ENCODE measurements at regions of chr4 and their contacts with region 1.

Region 1: GRCh38 chr4:138680989-138681604 is 334.5 kb upstream of the NOCT start:
- DNase-seq: peak; percentile 62
- H3K4me3 ChIP-seq: no peak overlapping the region
- H3K27ac ChIP-seq: no peak overlapping the region
- H3K4me1 ChIP-seq: peaks cover 0 to 10% of the 10 kb centered on the region in 2 experiments; a peak in 2 of 4 replicates
- H3K27me3 ChIP-seq: no peaks in the 10 kb centered on the region
- CTCF ChIP-seq: peak; percentile 94
- EP300 ChIP-seq: no peak
- RAD21 ChIP-seq: peak; percentile 99

Region 2: GRCh38 chr4:138090150-138090917 is 590.8 kb before region 1 on chr4:
- CTCF ChIA-PET with region 1: interaction called, 18 read pairs
- POLR2A ChIA-PET with region 1: no interaction called
- DNase-seq: peak; percentile 78
- H3K4me3 ChIP-seq: peak overlapping the region; percentile 34 to 40
- H3K27ac ChIP-seq: no peak overlapping the region
- H3K4me1 ChIP-seq: no peaks in the 10 kb centered on the region; a peak in 2 of 4 replicates
- H3K27me3 ChIP-seq: no peaks in the 10 kb centered on the region
- CTCF ChIP-seq: peak; percentile 81
- EP300 ChIP-seq: 0 out of 4 replicates have a peak, but pooled peaks of 1 of the 2 experiments have one; percentile 22
- RAD21 ChIP-seq: peak; percentile 89

Region 3: GRCh38 chr4:138182838-138183426 is 498.2 kb before region 1 on chr4:
- CTCF ChIA-PET with region 1: interaction called, 35 read pairs
- POLR2A ChIA-PET with region 1: no interaction called
- DNase-seq: peak; percentile 10
- H3K4me3 ChIP-seq: no peak overlapping the region
- H3K27ac ChIP-seq: no peak overlapping the region
- H3K4me1 ChIP-seq: peaks cover 0 to 2% of the 10 kb centered on the region in 2 experiments; a peak in 1 of 4 replicates
- H3K27me3 ChIP-seq: no peaks in the 10 kb centered on the region
- CTCF ChIP-seq: peak; percentile 85
- EP300 ChIP-seq: no peak
- RAD21 ChIP-seq: peak; percentile 90

Region 4: DNA sequence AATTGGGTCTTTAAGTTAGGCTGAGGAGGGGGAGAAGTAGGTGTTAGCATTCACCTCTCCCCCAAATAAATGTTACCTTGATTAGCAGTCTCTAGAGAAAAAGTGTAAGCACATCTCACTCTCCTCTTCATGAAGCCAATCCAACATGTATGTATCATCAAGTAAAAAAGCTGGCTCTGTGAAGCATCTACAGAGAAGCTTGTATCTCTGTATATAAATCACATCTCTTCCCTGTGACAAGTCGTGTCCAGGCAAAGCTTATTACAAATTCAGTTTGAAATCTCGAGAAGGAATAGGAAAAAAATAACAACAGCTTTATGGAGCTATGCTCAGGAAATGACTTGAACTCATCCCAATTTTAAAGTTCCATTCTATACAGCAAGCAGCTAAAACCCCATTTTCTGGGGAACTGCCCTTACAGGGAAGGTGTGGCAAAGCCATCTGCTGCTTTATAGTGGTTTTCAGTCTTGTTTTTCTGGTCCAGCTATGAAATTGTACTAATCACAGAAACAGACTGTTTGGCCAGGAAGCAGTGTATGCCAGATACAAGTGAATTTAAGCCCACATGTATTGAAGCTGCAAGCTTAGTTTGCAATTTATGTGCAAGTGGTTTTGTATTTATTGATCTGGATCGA is 21.2 kb after region 1 on chr4:
- CTCF ChIA-PET with region 1: interaction called, 10 read pairs
- POLR2A ChIA-PET with region 1: no interaction called
- DNase-seq: no peak
- H3K4me3 ChIP-seq: no peak overlapping the region
- H3K27ac ChIP-seq: peak overlapping the region in 1 of 2 experiments; percentile 71; a peak in 2 of 4 replicates
- H3K4me1 ChIP-seq: no peaks in the 10 kb centered on the region; a peak in 2 of 4 replicates
- H3K27me3 ChIP-seq: no peaks in the 10 kb centered on the region
- CTCF ChIP-seq: no peak
- EP300 ChIP-seq: no peak
- RAD21 ChIP-seq: no peak

Region 5: GRCh38 chr4:138845054-138845453 is 164.0 kb after region 1 on chr4:
- CTCF ChIA-PET with region 1: no interaction called
- POLR2A ChIA-PET with region 1: no interaction called
- DNase-seq: no peak
- H3K4me3 ChIP-seq: no peak overlapping the region
- H3K27ac ChIP-seq: no peak overlapping the region
- H3K4me1 ChIP-seq: peaks cover 0 to 9% of the 10 kb centered on the region in 2 experiments; a peak in 2 of 4 replicates
- H3K27me3 ChIP-seq: no peaks in the 10 kb centered on the region; the same call in 1 of the 2 replicates
- CTCF ChIP-seq: no peak
- EP300 ChIP-seq: no peak
- RAD21 ChIP-seq: no peak